Activated CD8-positive, alpha-beta T cell treated with anti-CD3 and anti-CD28 coated beads for 36 hours (primary cell): ENCODE measurements at regions of chr5 and their contacts with region 1.

Region 1: DNA sequence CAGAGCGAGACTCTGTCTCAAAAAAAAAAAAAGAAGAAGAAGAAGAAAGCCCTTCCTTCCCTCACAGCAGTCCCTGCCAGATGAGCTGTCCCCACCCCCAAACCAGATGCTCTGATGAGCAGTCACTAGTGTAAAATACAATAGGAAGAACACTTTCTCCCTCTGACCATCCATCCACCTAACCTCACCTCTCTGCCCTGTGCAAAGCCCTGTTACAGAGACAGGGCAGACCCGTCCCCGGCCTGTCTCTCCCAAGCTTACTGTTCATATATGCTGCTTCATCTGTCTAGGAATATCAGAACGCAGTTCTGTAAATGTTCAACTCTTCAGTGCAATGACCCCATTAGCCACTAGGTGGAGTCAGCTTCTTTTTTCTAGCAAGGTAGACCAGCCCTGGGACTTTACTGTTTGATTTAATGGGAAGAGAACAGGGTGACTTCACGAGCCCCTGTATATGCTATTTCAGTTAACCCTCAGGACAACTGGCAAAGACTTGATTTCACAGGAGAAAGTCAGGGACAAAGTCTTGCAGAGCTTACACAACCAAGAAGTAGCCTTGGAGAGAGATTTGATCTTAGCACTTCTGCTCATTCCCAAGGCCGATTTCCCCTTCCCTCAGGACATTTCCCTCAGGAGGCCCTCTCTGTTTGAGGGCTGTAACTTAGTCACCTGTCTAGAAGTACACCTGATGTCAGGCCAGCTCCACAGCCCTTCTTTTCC is 14.9 kb upstream of the FGFR4 start:
- DNase-seq: peak; percentile 87
- ATAC-seq: peak; percentile 96
- H3K4me3 Mint-ChIP-seq: no peak overlapping the region
- H3K27ac Mint-ChIP-seq: no peak overlapping the region
- H3K4me1 Mint-ChIP-seq: peaks cover 3% of the 10 kb centered on the region
- H3K27me3 Mint-ChIP-seq: no peaks in the 10 kb centered on the region
- CTCF ChIP-seq: peak; percentile 88

Region 2: GRCh38 chr5:177049285-177049684 is 22.5 kb before region 1 on chr5:
- CTCF ChIA-PET with region 1: interaction called, 29 read pairs
- POLR2A ChIA-PET with region 1: no interaction called
- intact Hi-C with region 1: no loop called
- DNase-seq: peak; percentile 23
- ATAC-seq: no peak
- H3K4me3 Mint-ChIP-seq: no peak overlapping the region
- H3K27ac Mint-ChIP-seq: no peak overlapping the region
- H3K4me1 Mint-ChIP-seq: no peaks in the 10 kb centered on the region
- H3K27me3 Mint-ChIP-seq: no peaks in the 10 kb centered on the region
- CTCF ChIP-seq: no peak

Region 3: DNA sequence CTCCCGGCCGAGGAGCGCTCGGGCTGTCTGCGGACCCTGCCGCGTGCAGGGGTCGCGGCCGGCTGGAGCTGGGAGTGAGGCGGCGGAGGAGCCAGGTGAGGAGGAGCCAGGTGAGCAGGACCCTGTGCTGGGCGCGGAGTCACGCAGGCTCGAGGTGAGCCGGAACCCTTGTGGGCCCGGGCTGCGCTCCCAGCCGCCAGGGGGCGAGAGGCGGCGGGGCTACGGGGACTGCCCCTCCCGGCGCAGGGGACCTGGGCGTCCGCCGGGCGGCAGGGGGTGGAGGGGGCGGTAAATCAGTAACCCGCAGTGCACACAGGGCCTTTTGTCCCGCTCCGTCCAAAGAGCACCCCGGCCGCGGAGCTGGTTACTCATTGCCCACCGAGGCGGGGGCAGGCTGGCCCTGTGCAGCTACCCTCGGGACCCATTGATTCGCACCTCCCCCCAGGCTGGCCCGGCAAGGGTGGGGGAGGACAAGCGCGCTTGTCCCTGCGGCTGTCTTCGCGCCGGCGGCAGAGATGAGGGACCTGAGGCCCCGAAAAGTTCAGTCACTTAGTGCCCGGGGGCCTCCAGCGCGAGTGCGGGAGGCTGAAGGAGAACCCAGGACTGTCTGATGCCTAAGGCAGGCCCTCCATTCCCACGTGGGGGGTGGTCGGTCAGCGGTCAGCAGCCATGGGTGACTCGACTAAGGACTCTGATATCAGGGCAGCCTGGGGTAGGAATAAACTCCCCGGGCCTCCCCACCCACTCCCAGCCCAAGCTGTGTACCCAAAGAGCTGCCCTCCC is 15.3 kb after region 1 on chr5:
- CTCF ChIA-PET with region 1: interaction called, 44 read pairs
- POLR2A ChIA-PET with region 1: interaction called, 3 read pairs
- intact Hi-C with region 1: no loop called
- DNase-seq: peak; percentile 64
- ATAC-seq: peak; percentile 85
- H3K4me3 Mint-ChIP-seq: peak overlapping the region; percentile 22
- H3K27ac Mint-ChIP-seq: no peak overlapping the region
- H3K4me1 Mint-ChIP-seq: peaks cover 3% of the 10 kb centered on the region
- H3K27me3 Mint-ChIP-seq: peaks cover 15% of the 10 kb centered on the region
- CTCF ChIP-seq: peak; percentile 78